ENCODE measurements at regions of chr12 and their contacts with region 1.

Region 1: GRCh38 chr12:121443193-121443870 is 43.4 kb downstream of the RNF34 start:
- DNase-seq: peak; percentile 45
- ATAC-seq: peak; percentile 93
- H3K4me3 ChIP-seq: no peak overlapping the region
- H3K27ac ChIP-seq: no peak overlapping the region
- H3K4me1 ChIP-seq: peaks cover 7% of the 10 kb centered on the region; the same call in 1 of the 2 replicates
- H3K27me3 ChIP-seq: no peaks in the 10 kb centered on the region
- CTCF ChIP-seq: peak; percentile 96
- EP300 ChIP-seq: no peak
- POLR2A ChIP-seq: no peak
- RAD21 ChIP-seq: peak; percentile 73

Region 2: DNA sequence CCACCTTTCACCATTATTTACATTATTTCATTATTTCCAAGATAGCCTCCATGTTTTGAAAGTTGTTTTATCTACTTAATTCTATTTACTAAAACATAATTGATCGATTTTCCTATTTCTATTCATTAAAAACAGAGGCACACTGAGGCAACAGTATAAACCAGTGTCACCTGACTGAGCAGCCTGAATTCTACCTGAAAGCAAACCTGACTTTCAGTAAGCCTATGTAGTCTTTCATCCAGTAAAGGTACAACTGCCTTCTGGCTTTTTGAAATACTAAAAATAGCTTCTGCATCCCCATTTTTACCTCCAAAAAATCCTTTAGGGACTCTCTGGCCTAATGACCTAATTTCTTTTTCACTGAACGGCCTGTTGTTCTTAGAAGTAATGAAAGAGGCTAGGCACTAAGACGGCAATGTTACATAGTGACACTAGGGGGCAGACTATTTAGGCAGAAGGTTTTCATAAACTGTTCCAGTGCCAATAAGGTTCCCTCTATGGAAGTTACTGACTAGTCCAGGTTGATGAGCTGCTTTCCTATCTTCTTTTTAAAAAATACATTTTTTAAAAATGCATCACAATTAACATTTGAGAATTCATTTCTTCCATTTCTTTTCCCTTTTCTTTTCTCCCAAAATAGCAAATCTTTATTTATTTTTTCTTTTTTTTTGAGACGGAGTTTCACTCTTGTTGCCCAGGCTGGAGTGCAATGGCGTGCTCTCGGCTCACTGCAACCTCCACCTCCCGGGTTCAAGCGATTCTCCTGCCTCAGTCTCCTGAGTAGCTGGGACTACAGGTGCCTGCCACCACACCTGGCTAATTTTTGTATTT is 108.6 kb before region 1 on chr12:
- CTCF ChIA-PET with region 1: interaction called, 38 read pairs
- POLR2A ChIA-PET with region 1: interaction called, 3 read pairs
- in situ Hi-C with region 1: no loop called
- intact Hi-C with region 1: no loop called
- DNase-seq: peak; percentile 58
- ATAC-seq: peak; percentile 86
- H3K4me3 ChIP-seq: no peak overlapping the region
- H3K27ac ChIP-seq: no peak overlapping the region
- H3K4me1 ChIP-seq: no peaks in the 10 kb centered on the region
- H3K27me3 ChIP-seq: no peaks in the 10 kb centered on the region
- CTCF ChIP-seq: peak; percentile 79
- EP300 ChIP-seq: no peak
- POLR2A ChIP-seq: no peak
- RAD21 ChIP-seq: no peak

Region 3: GRCh38 chr12:121345151-121345815 is 98.0 kb before region 1 on chr12:
- CTCF ChIA-PET with region 1: no interaction called
- POLR2A ChIA-PET with region 1: no interaction called
- in situ Hi-C with region 1: loop called (anchors 5 kb)
- intact Hi-C with region 1: no loop called
- DNase-seq: no peak
- ATAC-seq: no peak
- H3K4me3 ChIP-seq: no peak overlapping the region
- H3K27ac ChIP-seq: no peak overlapping the region
- H3K4me1 ChIP-seq: peaks cover 2% of the 10 kb centered on the region
- H3K27me3 ChIP-seq: no peaks in the 10 kb centered on the region
- CTCF ChIP-seq: no peak
- EP300 ChIP-seq: no peak
- POLR2A ChIP-seq: no peak
- RAD21 ChIP-seq: no peak

Measured in HepG2 (cell line).